AG04450 (cell line): ENCODE measurements at regions of chr21 and their contacts with region 1.

Region 1: GRCh38 chr21:41241316-41242035 is 73.5 kb downstream of the BACE2 start:
- DNase-seq: no peak
- H3K4me3 ChIP-seq: no peak overlapping the region
- H3K27ac ChIP-seq: no peak overlapping the region
- H3K27me3 ChIP-seq: no peaks in the 10 kb centered on the region
- CTCF ChIP-seq: no peak

Region 2: DNA sequence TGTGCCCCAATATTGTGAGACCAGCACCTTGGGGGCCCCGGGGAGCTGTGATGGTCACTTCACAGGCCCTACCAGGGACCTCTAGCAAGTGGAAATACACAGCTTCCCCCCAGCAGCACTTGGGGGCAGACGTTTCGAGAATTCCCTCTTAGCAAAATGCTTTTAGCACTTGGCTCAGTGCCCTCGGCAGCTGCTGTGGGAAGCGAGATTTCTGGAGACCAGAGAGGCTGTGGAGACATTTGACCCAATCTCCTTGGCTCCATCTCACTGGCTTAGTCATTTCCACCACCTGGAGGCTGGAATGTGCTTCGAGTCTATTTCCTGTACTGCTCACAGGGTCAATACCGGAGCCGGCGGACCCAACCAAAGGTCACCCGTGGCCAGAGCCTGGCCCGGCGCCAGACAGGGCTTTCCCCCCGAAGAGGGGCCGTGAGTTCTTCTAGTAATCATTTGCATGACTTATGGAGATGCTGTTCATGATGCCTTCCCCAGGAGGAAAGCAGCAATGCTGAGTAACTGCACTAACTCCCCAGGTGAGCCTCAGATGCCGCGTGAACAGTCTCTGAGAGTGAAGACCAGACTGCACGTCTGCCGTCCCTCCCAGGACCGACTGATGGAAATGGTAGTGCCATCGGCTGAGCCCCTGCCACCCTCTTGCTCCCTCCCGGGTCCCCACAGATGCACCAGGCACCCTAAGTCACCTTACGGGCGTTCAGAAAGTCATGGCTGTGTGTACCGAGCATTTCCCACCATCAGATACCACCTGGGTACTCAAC is 716.7 kb after region 1 on chr21:
- CTCF ChIA-PET with region 1: no interaction called
- POLR2A ChIA-PET with region 1: interaction called, 10 read pairs
- DNase-seq: peak; percentile 91
- H3K4me3 ChIP-seq: no peak overlapping the region
- H3K27ac ChIP-seq: peak overlapping the region; percentile 94
- H3K27me3 ChIP-seq: no peaks in the 10 kb centered on the region
- CTCF ChIP-seq: peak; percentile 53